ENCODE measurements at regions of chr1 and their contacts with region 1.

Region 1: DNA sequence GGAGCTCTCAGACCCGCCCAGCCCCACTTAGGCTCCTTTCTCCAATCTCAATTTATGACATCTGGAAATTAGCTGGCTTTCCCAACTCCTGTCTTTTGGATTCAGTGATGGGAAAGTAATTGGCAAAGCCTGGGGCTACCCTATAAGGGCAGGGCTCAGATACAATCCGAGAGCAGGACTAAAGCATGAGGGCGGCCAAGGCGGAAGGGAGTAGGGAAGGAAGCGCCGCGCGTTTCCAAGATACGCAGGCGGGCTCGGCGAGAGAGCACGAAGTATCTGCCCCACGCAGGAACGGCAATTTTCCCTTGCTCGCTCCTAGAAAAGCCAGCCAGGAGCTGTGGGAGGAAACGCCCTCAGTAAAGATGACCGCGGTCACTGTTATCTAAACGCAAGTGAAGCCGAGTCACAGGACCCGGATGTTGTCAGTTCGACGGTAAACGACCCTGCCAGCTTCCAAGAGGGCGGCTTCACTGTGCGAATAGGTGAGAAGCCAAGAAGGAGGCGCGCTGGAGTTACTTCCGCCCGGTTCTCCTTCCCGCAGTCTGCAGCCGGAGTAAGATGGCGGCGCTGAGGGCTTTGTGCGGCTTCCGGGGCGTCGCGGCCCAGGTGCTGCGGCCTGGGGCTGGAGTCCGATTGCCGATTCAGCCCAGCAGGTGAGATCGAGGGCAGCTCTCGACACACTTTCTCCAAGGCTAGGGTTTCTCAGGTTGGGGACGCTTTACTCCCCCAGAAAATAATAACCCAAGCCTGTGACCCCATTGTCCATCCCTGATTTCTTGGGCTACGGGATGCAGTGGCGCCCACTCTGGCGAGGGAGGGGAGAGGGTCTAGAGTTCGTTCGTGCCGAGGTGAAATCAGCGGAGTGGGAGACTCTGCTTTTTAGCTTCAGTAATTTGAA is at the start of gene NDUFS2:
- DNase-seq: peak; percentile 99
- H3K4me3 ChIP-seq: peak within 1 kb of the TSS; percentile 75
- H3K27ac ChIP-seq: peak within 1 kb of the TSS; percentile 57
- H3K4me1 ChIP-seq: peaks cover 35% of the 10 kb centered on the region
- CTCF ChIP-seq: peak; percentile 79
- total RNA-seq, gene NDUFS2: 62.9 and 76.4 TPM in 2 replicates

Region 2: GRCh38 chr1:161185282-161185682 is 16.8 kb before region 1 on chr1:
- CTCF ChIA-PET with region 1: interaction called, 7 read pairs
- POLR2A ChIA-PET with region 1: interaction called, 17 read pairs
- intact Hi-C with region 1: no loop called
- DNase-seq: peak; percentile 88
- H3K4me3 ChIP-seq: peak overlapping the region; percentile 45
- H3K27ac ChIP-seq: peak overlapping the region; percentile 92
- H3K4me1 ChIP-seq: peaks cover 58% of the 10 kb centered on the region
- CTCF ChIP-seq: no peak

Region 3: DNA sequence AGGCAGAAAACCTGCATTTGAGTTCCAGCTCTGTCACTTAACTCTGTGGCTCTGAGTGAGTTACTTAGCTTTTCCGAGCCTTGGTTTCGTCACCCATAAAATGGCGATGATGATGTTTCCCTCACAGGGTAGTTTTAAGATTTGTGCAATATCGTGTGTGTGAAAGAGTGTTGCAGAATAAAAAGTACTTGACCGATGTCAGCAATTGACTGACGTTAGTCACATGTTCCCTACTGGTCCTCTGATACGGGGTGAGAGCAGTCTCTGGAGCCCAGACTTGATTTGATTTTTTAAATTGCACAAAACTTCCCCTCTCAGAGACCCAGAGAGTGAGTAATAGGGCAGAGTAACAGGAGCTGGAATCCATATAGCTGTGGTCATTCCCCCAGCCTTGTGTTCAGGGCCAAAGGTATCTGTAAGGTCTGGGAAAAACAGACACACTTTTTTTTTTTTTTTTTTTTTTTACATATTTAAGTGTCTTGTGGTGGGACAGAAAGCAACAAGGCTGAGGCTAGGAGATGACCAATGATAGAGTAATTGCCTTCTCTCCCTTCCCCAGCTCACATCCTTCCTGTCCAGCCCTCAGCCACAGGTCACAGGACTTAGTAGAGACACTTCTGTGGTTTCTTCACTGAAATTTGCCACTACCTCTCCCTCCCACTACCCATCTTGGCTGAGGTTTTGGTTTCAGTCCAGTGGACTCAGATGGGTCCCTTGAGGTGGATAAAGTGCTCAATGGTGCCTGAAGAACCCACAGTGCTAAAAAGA is 15.1 kb after region 1 on chr1:
- CTCF ChIA-PET with region 1: interaction called, 3 read pairs
- POLR2A ChIA-PET with region 1: interaction called, 22 read pairs
- intact Hi-C with region 1: no loop called
- DNase-seq: peak; percentile 80
- H3K4me3 ChIP-seq: peak overlapping the region; percentile 20
- H3K27ac ChIP-seq: peak overlapping the region; percentile 44
- H3K4me1 ChIP-seq: peaks cover 34% of the 10 kb centered on the region
- CTCF ChIP-seq: no peak

Region 4: GRCh38 chr1:161285521-161285920 is 83.4 kb after region 1 on chr1:
- CTCF ChIA-PET with region 1: no interaction called
- POLR2A ChIA-PET with region 1: no interaction called
- intact Hi-C with region 1: no loop called
- DNase-seq: no peak
- H3K4me3 ChIP-seq: no peak overlapping the region
- H3K27ac ChIP-seq: no peak overlapping the region
- H3K4me1 ChIP-seq: no peaks in the 10 kb centered on the region
- CTCF ChIP-seq: no peak